B cell (primary cell): ENCODE measurements at regions of chr12 and their contacts with region 1.

Region 1: DNA sequence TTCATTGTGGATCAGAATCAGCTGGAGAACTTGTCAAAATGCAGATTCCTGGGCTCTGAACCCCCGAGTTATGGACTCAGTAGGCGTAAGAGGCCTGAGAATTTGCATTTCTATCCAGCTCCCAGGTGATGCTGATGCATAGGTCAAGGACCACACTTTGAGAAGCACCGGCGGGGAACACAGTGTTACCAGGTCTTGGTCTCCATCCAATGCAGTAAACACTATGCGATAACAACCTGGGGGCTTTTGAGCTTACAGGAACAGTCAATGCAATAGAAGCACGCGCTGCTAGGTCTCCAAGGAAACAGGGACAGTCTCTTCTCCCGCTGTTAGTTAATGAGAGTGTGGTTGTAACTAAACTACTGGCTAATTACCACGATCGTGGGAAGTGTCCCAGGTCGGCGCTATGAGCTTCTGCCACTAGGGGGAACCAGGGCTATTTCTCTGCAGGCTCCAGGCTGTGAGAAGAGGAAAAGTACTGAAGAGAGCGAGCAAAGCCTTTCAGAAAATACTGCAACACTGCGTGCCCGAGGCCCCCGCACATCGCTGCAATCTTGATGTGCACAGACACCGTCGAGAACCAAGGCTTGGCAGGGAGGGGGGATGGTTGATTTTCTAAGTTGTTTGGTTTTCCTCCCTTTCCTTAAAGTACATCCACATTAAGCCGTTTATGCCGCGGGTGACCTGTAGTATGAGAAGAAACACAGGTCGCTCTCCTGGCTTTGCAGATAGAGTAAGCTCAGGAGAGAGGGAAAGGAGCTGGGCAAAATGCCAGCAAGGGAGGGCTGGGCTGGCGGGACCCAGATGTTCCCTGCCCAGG is 52.0 kb upstream of the KCNA1 start:
- DNase-seq: peak; percentile 81
- ATAC-seq: peak; percentile 89
- H3K4me3 ChIP-seq: peak overlapping the region in 4 of 5 experiments; percentile 17 to 34 (median 24)
- H3K4me3 Mint-ChIP-seq: peak overlapping the region; percentile 82
- H3K27ac ChIP-seq: no peak overlapping the region
- H3K27ac Mint-ChIP-seq: no peak overlapping the region
- H3K4me1 ChIP-seq: peaks cover 19 to 22% of the 10 kb centered on the region in 2 donors
- H3K4me1 Mint-ChIP-seq: peaks cover 17% of the 10 kb centered on the region
- H3K27me3 ChIP-seq: peaks cover 0 to 33% (median 10%) of the 10 kb centered on the region in 4 experiments
- H3K27me3 Mint-ChIP-seq: peaks cover 43% of the 10 kb centered on the region
- CTCF ChIP-seq: peak; percentile 93

Region 2: DNA sequence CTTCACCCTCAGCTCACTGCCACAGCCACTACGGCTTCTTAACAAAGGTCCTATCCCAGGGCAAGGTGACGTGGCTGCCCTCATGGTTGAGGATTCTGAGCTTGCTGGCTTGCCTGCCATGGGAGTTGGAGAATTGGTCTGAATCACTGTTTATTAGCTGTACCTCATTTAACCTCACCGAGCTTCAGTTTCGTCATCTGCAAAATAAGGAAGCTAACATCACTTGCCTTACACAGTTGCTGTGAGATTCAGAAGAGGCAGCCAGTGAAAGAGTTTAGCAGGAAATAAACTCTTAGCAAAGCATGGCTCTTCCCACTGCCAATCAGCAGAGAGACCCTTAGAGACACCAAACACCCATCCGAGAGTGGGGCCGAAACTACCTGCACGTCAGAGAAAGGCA is 38.0 kb before region 1 on chr12:
- CTCF ChIA-PET with region 1: interaction called, 24 read pairs
- POLR2A ChIA-PET with region 1: no interaction called
- intact Hi-C with region 1: no loop called
- DNase-seq: peak; percentile 70
- ATAC-seq: peak; percentile 84
- H3K4me3 ChIP-seq: no peak overlapping the region
- H3K4me3 Mint-ChIP-seq: peak overlapping the region; percentile 67
- H3K27ac ChIP-seq: peak overlapping the region; percentile 42 to 65
- H3K27ac Mint-ChIP-seq: peak overlapping the region; percentile 86
- H3K4me1 ChIP-seq: peaks cover 54 to 64% of the 10 kb centered on the region in 2 donors
- H3K4me1 Mint-ChIP-seq: peaks cover 65% of the 10 kb centered on the region
- H3K27me3 ChIP-seq: peaks cover 0 to 7% (median 0%) of the 10 kb centered on the region in 4 experiments
- H3K27me3 Mint-ChIP-seq: peaks cover 11% of the 10 kb centered on the region
- CTCF ChIP-seq: no peak

Region 3: DNA sequence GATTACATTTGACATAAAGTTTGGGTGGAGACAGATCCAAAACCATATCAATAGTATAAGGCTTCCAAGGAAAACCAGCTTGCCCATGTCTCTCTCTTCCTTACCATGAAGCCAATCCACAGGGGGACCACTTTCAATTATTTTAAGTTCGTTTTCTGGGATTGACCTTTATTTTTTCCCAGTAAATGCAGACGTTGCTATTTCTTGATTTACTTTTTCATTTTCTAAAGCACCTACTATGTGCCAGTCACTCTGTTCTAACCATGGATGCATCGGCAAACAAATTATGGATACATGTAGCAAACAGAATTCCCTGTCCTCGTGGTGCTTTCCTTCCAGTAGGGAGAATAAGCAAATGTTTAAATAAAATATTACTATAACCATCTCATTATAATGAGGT is 13.8 kb before region 1 on chr12:
- CTCF ChIA-PET with region 1: interaction called, 47 read pairs
- POLR2A ChIA-PET with region 1: no interaction called
- intact Hi-C with region 1: no loop called
- DNase-seq: no peak
- ATAC-seq: no peak
- H3K4me3 ChIP-seq: no peak overlapping the region
- H3K4me3 Mint-ChIP-seq: no peak overlapping the region
- H3K27ac ChIP-seq: no peak overlapping the region
- H3K27ac Mint-ChIP-seq: no peak overlapping the region
- H3K4me1 ChIP-seq: peaks cover 8% of the 10 kb centered on the region in 2 donors
- H3K4me1 Mint-ChIP-seq: peaks cover 10% of the 10 kb centered on the region
- H3K27me3 ChIP-seq: peaks cover 0 to 2% (median 0%) of the 10 kb centered on the region in 4 experiments
- H3K27me3 Mint-ChIP-seq: no peaks in the 10 kb centered on the region
- CTCF ChIP-seq: no peak

Region 4: GRCh38 chr12:5003020-5003666 is 145.5 kb after region 1 on chr12:
- CTCF ChIA-PET with region 1: interaction called, 9 read pairs
- POLR2A ChIA-PET with region 1: no interaction called
- intact Hi-C with region 1: loop called (anchors 1 kb)
- DNase-seq: peak; percentile 62
- ATAC-seq: peak; percentile 60
- H3K4me3 ChIP-seq: no peak overlapping the region
- H3K4me3 Mint-ChIP-seq: no peak overlapping the region
- H3K27ac ChIP-seq: no peak overlapping the region
- H3K27ac Mint-ChIP-seq: no peak overlapping the region
- H3K4me1 ChIP-seq: no peaks in the 10 kb centered on the region
- H3K4me1 Mint-ChIP-seq: no peaks in the 10 kb centered on the region
- H3K27me3 ChIP-seq: peaks cover 0 to 36% (median 5%) of the 10 kb centered on the region in 4 experiments
- H3K27me3 Mint-ChIP-seq: peaks cover 23% of the 10 kb centered on the region
- CTCF ChIP-seq: peak; percentile 82

Region 5: GRCh38 chr12:5083955-5084849 is 226.5 kb after region 1 on chr12:
- CTCF ChIA-PET with region 1: interaction called, 36 read pairs
- POLR2A ChIA-PET with region 1: no interaction called
- intact Hi-C with region 1: no loop called
- DNase-seq: peak; percentile 78
- ATAC-seq: peak; percentile 56
- H3K4me3 ChIP-seq: no peak overlapping the region
- H3K4me3 Mint-ChIP-seq: no peak overlapping the region
- H3K27ac ChIP-seq: no peak overlapping the region
- H3K27ac Mint-ChIP-seq: no peak overlapping the region
- H3K4me1 ChIP-seq: no peaks in the 10 kb centered on the region
- H3K4me1 Mint-ChIP-seq: no peaks in the 10 kb centered on the region
- H3K27me3 ChIP-seq: no peaks in the 10 kb centered on the region
- H3K27me3 Mint-ChIP-seq: peaks cover 24% of the 10 kb centered on the region
- CTCF ChIP-seq: peak; percentile 92